ENCODE measurements at regions of chr3 and their contacts with region 1.

Region 1: DNA sequence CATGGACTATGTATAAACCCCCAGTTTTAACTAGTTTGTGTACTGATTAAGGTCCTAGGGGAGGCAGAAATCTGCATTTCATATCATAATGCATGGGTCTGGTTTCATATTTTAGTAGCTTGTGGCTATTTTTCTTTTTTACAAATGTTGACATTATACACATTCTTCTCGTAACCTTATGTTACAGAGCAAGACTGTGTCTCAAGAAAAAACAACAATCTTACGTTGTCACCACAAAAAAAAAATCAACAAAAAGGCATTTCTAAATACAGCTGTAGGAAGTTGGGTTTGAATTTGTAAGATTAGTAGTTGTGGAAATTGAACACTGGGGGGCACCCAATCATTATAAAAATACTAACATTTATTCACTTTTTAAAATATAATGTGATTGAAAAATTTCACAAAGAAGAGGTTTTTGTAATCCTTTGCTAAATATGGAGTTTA is 17.9 kb downstream of the SERP1 start:
- DNase-seq: peak; percentile 26
- CTCF ChIP-seq: peak; percentile 14

Region 2: DNA sequence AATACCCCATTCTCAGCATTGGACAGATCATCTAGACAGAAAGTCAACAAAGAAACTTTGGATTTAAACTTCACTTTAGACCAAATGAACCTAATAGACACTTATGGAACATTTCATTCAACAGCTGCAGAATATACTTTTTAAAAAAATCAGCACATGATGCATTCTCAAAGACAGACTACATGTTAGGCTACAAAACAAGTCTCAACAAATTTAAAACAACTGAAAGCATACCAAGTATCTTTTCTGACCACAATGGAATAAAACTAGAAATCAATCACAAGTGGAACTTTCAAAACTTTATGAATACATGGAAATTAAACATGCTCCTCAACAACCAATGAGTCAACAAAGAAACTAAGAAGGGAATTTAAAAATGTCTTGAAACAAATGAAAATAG is 20.0 kb before region 1 on chr3:
- CTCF ChIA-PET with region 1: no interaction called
- POLR2A ChIA-PET with region 1: no interaction called
- DNase-seq: no peak
- CTCF ChIP-seq: no peak

Region 3: DNA sequence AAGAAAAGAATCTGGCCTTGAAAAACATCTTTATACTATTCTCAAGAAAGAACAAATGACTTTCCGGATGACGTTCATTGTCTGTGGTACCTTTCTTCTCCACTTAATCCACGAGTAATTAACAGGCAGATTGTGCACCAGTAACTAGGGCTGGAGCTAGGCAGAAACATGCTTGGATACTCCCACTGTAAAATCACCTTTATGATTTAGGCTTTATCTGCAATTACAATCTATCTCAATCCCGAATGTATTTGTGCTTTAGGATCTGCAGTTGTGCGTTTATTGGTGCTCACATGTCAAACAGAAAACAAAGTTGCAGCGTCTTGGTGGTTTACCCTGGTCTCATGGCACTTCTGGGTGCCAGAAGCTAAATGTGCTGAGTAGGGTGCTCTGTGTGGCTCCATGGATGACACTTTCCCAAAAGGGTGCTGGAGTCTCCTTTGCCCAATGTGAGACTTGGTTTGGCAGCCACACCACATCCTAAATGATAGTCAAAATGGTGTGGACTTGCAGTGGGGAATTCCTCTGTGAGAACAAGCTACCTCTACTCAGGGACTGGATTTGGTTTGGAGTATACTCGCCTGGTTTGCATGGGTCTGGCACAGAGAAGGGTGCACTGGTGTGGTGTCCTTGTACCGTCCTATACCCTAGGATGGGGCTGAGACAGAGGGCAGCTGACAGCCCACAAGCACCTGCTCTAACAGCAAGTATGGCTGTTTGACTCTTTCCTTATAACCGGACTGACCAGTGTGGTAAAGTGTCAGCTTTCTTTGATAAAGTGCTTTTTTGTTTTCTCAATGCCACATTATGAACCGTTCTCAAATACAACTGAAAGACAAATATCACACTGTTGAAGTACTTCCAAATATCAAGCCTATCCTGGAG is 10.2 kb after region 1 on chr3:
- CTCF ChIA-PET with region 1: interaction called, 10 read pairs
- POLR2A ChIA-PET with region 1: no interaction called
- DNase-seq: no peak
- CTCF ChIP-seq: no peak

Measured in GM10248 (cell line).